ENCODE measurements at regions of chr17 and their contacts with region 1.

Region 1: GRCh38 chr17:77494664-77495435 is 354.1 kb downstream of the SEC14L1 start:
- DNase-seq: peak; percentile 61
- H3K4me3 Mint-ChIP-seq: no peak overlapping the region
- H3K27ac Mint-ChIP-seq: peak overlapping the region; percentile 8
- H3K4me1 Mint-ChIP-seq: peaks cover 18% of the 10 kb centered on the region
- H3K27me3 Mint-ChIP-seq: no peaks in the 10 kb centered on the region

Region 2: DNA sequence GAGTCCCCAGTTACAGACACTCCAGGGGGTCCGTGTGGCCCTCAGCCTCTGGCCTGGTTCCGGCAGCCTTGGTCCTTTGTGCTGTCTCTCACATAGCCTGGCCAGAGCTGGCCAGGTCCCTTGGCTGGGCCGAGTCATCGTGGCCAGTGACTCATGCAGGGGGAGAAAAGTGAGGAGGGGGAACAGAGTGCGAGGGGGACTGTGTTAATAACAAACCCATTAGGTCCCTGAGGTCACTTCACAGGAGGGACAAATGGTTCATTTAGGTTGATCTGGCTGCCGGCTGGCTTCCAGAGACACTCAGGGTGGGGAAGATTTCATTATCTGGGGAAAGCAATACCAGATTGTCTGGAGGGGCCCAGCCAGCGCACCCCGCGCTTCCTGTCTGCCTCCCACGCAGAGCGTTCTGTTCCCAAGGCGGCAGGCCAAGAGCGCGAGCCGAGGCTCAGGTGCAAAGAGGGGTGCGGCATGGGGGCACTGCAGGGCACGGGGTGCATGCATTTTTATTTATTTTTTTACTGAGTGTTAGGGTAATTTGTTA is 131.0 kb before region 1 on chr17:
- intact Hi-C with region 1: no loop called
- DNase-seq: no peak
- H3K4me3 Mint-ChIP-seq: no peak overlapping the region
- H3K27ac Mint-ChIP-seq: no peak overlapping the region
- H3K4me1 Mint-ChIP-seq: peaks cover 41% of the 10 kb centered on the region
- H3K27me3 Mint-ChIP-seq: peaks cover 5% of the 10 kb centered on the region

Region 3: GRCh38 chr17:77429919-77430752 is 64.7 kb before region 1 on chr17:
- intact Hi-C with region 1: loop called (anchors 1 kb)
- DNase-seq: peak; percentile 66
- H3K4me3 Mint-ChIP-seq: no peak overlapping the region
- H3K27ac Mint-ChIP-seq: peak overlapping the region; percentile 59
- H3K4me1 Mint-ChIP-seq: peaks cover 68% of the 10 kb centered on the region
- H3K27me3 Mint-ChIP-seq: no peaks in the 10 kb centered on the region

Region 4: DNA sequence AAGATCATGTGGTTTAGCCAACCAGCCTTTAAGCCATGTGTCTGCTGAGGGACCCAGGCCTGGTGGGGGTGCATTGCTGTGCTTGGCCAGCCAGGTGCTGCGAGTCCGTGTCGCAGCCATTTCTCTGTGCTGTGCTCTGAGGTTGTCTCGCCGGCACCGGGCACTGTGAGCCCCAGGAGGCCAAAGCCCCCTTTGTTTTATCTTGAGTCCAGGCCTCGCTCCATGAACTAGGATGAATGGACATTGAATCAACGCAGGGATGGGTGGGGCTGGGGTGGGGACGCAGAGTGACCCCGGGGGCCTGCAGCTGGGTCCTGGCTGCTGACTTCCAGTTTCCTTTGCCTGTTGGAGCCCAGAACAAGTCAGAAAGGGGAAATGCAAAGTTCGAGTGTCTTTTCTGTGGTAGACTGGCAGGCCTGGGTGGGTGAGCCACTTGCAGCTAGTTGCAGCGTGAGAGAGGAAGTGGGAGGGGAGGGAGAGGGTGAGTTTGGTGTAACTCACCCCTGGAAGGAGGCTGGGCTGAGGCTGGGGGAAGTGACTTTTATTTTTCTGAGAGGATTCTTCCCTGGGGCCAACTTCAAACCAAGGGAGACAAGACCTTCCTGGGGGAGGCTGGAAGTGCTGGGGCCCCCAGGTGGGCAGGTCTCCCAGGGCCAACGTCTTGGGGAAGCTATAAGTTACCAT is 29.4 kb before region 1 on chr17:
- intact Hi-C with region 1: loop called (anchors 2 kb)
- DNase-seq: peak; percentile 72
- H3K4me3 Mint-ChIP-seq: peak overlapping the region; percentile 59
- H3K27ac Mint-ChIP-seq: peak overlapping the region; percentile 89
- H3K4me1 Mint-ChIP-seq: peaks cover 77% of the 10 kb centered on the region
- H3K27me3 Mint-ChIP-seq: no peaks in the 10 kb centered on the region

Region 5: GRCh38 chr17:77471984-77472461 is 22.8 kb before region 1 on chr17:
- intact Hi-C with region 1: loop called (anchors 2 kb)
- DNase-seq: no peak
- H3K4me3 Mint-ChIP-seq: peak overlapping the region; percentile 59
- H3K27ac Mint-ChIP-seq: peak overlapping the region; percentile 88
- H3K4me1 Mint-ChIP-seq: peaks cover 83% of the 10 kb centered on the region
- H3K27me3 Mint-ChIP-seq: no peaks in the 10 kb centered on the region

Region 6: GRCh38 chr17:77516902-77517301 is 22.1 kb after region 1 on chr17:
- intact Hi-C with region 1: no loop called
- DNase-seq: no peak
- H3K4me3 Mint-ChIP-seq: no peak overlapping the region
- H3K27ac Mint-ChIP-seq: no peak overlapping the region
- H3K4me1 Mint-ChIP-seq: peaks cover 2% of the 10 kb centered on the region
- H3K27me3 Mint-ChIP-seq: peaks cover 12% of the 10 kb centered on the region

Region 7: DNA sequence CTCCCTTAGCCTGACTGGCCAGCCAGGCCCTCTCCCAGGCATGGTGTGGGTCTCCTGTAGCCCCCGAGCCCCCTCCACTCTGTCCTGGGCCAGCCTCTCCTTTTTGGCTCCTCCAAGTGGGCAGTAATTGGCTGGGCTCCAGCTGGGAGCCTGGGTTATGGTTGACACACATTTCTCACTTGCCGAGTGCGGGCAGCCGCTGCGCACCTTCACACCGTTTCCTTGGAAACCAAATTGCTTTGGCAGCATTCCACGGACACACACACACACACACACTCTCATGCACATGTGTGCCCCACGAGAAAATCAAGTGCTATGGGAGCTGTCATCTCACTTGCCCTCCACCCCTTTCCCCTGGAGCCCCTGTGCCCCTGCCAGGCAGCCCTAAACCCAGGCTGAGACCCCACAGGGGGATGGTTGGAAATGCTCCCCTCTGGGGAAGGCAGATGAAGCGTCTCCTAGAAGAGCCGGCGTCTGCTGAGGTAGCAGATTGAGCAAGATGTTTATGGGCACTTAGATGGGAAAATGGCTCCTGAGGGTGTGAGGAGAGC is 61.0 kb after region 1 on chr17:
- intact Hi-C with region 1: no loop called
- DNase-seq: no peak
- H3K4me3 Mint-ChIP-seq: no peak overlapping the region
- H3K27ac Mint-ChIP-seq: no peak overlapping the region
- H3K4me1 Mint-ChIP-seq: no peaks in the 10 kb centered on the region
- H3K27me3 Mint-ChIP-seq: peaks cover 22% of the 10 kb centered on the region